ENCODE measurements at regions of chr1 and their contacts with region 1.

Region 1: DNA sequence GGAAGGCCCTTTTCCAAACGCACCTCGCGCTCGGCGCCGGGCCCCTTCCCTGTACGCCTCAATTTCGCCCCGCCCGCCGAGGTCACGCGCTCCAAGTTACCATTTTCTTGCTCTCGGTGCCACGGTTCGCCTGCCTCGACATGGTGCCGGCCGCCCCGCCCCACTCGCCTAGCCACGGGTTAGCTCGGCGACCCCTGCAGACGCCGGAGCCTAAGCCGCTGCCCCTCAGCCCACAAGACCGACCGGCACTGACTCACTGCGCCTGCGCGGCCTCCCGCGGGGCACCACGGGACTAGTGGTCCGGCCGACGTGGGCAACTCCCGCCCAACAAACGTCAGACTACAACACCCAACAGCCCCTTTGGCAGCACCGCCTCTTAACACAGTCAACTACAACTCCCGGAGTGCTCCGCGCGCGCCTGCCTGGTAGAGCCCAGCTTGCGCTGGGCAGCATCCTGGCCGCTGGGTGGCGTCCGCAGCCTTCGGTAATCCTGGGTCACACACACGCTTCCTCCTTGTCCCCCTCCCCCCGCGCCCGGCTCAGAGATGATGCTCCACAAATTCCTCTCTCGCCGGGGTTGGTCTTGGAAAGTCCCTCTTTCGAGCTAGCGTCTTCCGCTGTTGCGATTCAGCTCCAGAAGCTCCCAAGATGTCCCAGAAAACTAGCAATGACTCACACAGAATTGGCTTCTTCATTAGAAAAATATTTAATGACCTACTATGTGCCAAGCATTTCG is at the start of gene TRAPPC3:
- DNase-seq: peak; percentile 99
- ATAC-seq: peak; percentile 89
- H3K4me3 ChIP-seq: peak within 1 kb of the TSS; percentile 75 to 88
- H3K27ac ChIP-seq: peak within 1 kb of the TSS; percentile 65
- H3K4me1 ChIP-seq: peaks cover 22 to 35% of the 10 kb centered on the region in 2 experiments
- H3K27me3 ChIP-seq: no peaks in the 10 kb centered on the region
- CTCF ChIP-seq: peak in 2 of 3 experiments; percentile 97; a peak in 4 of 6 replicates
- POLR2A ChIP-seq: peak; percentile 62
- RAD21 ChIP-seq: no peak
- total RNA-seq, gene TRAPPC3: 64.6 TPM

Region 2: GRCh38 chr1:36187800-36188593 is 38.6 kb after region 1 on chr1:
- CTCF ChIA-PET with region 1: interaction called, 37 read pairs
- POLR2A ChIA-PET with region 1: interaction called, 7 read pairs
- RAD21 ChIA-PET with region 1: interaction called, 13 to 15 read pairs
- intact Hi-C with region 1: loop called (anchors 1 kb)
- DNase-seq: peak; percentile 79
- ATAC-seq: peak; percentile 96
- H3K4me3 ChIP-seq: no peak overlapping the region
- H3K27ac ChIP-seq: peak overlapping the region; percentile 20; the same call in 1 of the 2 replicates
- H3K4me1 ChIP-seq: peaks cover 4 to 13% of the 10 kb centered on the region in 2 experiments; a peak in 3 of 4 replicates
- H3K27me3 ChIP-seq: no peaks in the 10 kb centered on the region
- CTCF ChIP-seq: peak; percentile 90 to 94 (median 92)
- POLR2A ChIP-seq: no peak
- RAD21 ChIP-seq: peak; percentile 99

Region 3: GRCh38 chr1:36285448-36286101 is 136.2 kb after region 1 on chr1:
- CTCF ChIA-PET with region 1: interaction called, 35 read pairs
- POLR2A ChIA-PET with region 1: interaction called, 5 read pairs
- RAD21 ChIA-PET with region 1: interaction called, 6 to 7 read pairs
- intact Hi-C with region 1: loop called (anchors 1 kb)
- DNase-seq: peak; percentile 78
- ATAC-seq: peak; percentile 98
- H3K4me3 ChIP-seq: no peak overlapping the region
- H3K27ac ChIP-seq: peak overlapping the region; percentile 17; the same call in 1 of the 2 replicates
- H3K4me1 ChIP-seq: no peaks in the 10 kb centered on the region; a peak in 2 of 4 replicates
- H3K27me3 ChIP-seq: no peaks in the 10 kb centered on the region
- CTCF ChIP-seq: peak; percentile 68 to 84 (median 82); a peak in 5 of 6 replicates
- POLR2A ChIP-seq: no peak
- RAD21 ChIP-seq: peak; percentile 85

Region 4: DNA sequence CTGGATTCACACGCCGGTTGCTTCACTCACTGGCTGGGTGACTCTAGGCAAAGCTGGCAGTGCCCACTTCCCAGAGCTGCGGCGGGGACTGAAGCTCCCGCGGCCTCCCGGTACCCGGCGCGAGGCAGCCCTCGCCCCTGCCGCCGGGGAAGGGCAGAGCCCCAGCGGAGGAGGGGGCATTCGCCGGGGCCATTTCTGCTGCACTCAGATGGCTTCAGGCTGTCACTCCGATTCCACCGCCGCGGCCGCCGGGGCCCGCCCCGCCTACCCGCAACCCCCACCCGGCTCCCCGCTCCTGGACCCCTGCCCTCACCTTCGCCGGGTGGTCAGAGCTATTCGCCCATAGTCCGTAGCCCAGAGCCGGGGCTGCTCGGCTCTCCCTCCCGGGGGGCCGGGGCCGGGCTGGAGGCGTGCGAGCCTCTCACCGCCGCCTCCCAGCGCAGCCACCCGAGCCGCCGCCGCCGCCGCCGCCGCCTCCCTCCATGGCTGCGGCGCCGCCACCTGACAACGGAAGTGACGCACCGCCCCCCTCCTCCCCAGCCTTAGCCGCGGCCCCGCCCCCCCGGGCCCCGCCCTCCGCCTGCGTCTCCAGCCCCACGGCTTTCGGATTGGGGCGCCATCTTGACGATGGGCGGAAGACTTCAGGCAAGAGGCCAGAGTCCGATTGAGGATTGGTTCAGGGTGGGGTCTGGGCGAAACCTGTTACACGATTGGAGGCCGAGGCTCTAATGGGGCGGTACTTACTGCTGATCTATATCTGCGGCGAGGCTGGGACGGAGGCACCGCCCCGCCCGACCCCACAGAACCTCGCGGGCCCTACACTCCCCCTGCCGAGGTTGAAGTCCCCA is 236.2 kb after region 1 on chr1 and contains the start of gene STK40:
- CTCF ChIA-PET with region 1: interaction called, 3 read pairs
- POLR2A ChIA-PET with region 1: interaction called, 4 read pairs
- RAD21 ChIA-PET with region 1: no interaction called
- intact Hi-C with region 1: loop called (anchors 10 kb)
- DNase-seq: peak; percentile 99
- ATAC-seq: peak; percentile 87
- H3K4me3 ChIP-seq: peak within 1 kb of the TSS; percentile 87 to 96
- H3K27ac ChIP-seq: peak within 1 kb of the TSS; percentile 89
- H3K4me1 ChIP-seq: peaks cover 16 to 32% of the 10 kb centered on the region in 2 experiments
- H3K27me3 ChIP-seq: no peaks in the 10 kb centered on the region
- CTCF ChIP-seq: no peak
- POLR2A ChIP-seq: no peak
- RAD21 ChIP-seq: no peak
- total RNA-seq, gene STK40: 33.9 TPM

Measured in HCT116 (cell line).